A673 (cell line): ENCODE measurements at regions of chr19 and their contacts with region 1.

Region 1: DNA sequence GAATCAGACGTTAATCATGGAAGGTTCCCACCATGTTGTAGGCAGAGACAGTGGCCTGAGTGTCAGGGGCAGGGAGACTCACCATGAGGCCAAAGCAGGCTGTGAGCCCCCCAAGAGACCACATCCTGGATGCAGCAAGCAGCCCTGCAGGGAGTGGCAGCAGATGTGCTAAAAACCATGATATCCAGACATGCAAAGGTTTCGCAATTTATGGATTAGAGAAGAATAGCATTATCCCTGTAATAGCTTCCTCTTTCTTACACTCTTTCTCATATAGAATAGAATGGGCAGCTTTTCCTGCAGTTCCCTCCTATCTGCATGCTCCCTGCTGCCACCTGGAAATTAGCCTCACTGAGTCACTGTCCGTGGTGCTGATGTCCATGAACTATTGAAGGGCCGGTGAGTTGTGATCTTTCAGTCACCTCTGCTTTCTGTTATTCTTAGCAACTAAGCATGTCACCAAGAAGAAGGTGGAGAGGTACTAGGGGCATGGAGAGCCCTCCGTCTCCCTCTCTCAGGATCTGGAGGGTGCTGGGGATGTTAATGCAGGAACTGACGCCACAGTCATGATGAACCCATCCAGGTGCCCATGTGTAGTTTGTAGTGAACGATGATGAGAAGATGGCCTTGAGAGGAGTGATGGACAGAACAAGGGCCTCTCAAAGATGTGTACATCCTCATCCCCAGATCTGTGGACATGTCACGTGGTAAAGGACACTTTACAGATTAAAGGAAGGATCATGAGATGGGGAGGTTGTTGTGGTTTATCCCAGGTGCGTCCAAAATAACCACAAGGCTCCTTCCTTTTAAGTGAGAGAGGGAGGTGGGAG is 9.9 kb downstream of the CEACAM4 start:
- DNase-seq: peak; percentile 54
- H3K4me3 ChIP-seq: no peak overlapping the region
- H3K27ac ChIP-seq: no peak overlapping the region
- H3K4me1 ChIP-seq: no peaks in the 10 kb centered on the region
- H3K27me3 ChIP-seq: no peaks in the 10 kb centered on the region
- CTCF ChIP-seq: 0 out of 2 replicates have a peak, but pooled peaks have one; percentile 13

Region 2: DNA sequence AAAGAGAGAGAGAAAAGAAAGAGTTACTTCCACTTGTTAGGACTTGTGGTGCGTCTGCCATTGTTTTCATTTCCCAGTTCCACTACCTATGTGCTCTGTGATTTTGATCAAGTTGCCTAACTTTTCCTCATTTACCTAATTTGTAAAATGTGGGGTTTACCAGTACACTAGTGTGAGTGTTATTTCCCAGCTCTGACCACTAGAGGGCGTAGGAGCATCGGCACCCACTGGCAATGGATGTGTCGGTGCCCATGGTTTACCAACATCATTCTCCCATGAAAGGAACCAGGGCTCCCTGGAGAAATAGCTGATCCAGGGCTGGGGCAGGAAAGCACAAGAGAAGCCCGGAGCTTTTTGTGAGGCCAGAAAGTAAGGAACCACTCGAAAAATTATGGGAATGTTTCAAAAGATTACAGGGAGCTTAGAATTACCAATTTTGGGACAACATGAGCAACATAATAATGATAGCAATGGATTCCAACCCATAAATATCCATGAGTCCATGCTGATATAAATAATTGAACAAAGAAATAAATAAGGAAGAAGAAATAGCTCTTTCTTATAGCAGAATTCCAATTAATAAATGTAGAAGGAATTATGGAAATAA is 25.0 kb after region 1 on chr19:
- CTCF ChIA-PET with region 1: no interaction called
- POLR2A ChIA-PET with region 1: no interaction called
- intact Hi-C with region 1: no loop called
- DNase-seq: peak; percentile 84
- H3K4me3 ChIP-seq: no peak overlapping the region
- H3K27ac ChIP-seq: no peak overlapping the region
- H3K4me1 ChIP-seq: no peaks in the 10 kb centered on the region
- H3K27me3 ChIP-seq: no peaks in the 10 kb centered on the region
- CTCF ChIP-seq: peak; percentile 95

Region 3: GRCh38 chr19:41872775-41873647 is 256.0 kb after region 1 on chr19:
- CTCF ChIA-PET with region 1: no interaction called
- POLR2A ChIA-PET with region 1: interaction called, 10 read pairs
- intact Hi-C with region 1: no loop called
- DNase-seq: peak; percentile 81
- H3K4me3 ChIP-seq: no peak overlapping the region
- H3K27ac ChIP-seq: peak overlapping the region; percentile 56
- H3K4me1 ChIP-seq: peaks cover 27% of the 10 kb centered on the region
- H3K27me3 ChIP-seq: no peaks in the 10 kb centered on the region
- CTCF ChIP-seq: peak; percentile 86